Activated naive CD4-positive, alpha-beta T cell treated with anti-CD3 and anti-CD28 coated beads for 36 hours (primary cell): ENCODE measurements at regions of chr5 and their contacts with region 1.

Region 1: GRCh38 chr5:128201065-128201926 is 117.7 kb downstream of the SLC12A2 start:
- DNase-seq: peak; percentile 90
- H3K4me3 Mint-ChIP-seq: no peak overlapping the region
- H3K27ac Mint-ChIP-seq: no peak overlapping the region
- H3K4me1 Mint-ChIP-seq: peaks cover 32% of the 10 kb centered on the region
- H3K27me3 Mint-ChIP-seq: no peaks in the 10 kb centered on the region

Region 2: GRCh38 chr5:127290019-127290945 is 911.0 kb before region 1 on chr5 and contains the start of gene MEGF10:
- CTCF ChIA-PET with region 1: no interaction called
- intact Hi-C with region 1: loop called (anchors 5 kb)
- DNase-seq: peak; percentile 42
- H3K4me3 Mint-ChIP-seq: peak within 1 kb of the TSS; percentile 19
- H3K27ac Mint-ChIP-seq: no peak within 1 kb of the TSS
- H3K4me1 Mint-ChIP-seq: peaks cover 13% of the 10 kb centered on the region
- H3K27me3 Mint-ChIP-seq: peaks cover 49% of the 10 kb centered on the region
- total RNA-seq, gene MEGF10: not detected

Region 3: GRCh38 chr5:127746756-127747155 is 454.5 kb before region 1 on chr5:
- CTCF ChIA-PET with region 1: no interaction called
- intact Hi-C with region 1: loop called (anchors 1 kb)
- DNase-seq: no peak
- H3K4me3 Mint-ChIP-seq: no peak overlapping the region
- H3K27ac Mint-ChIP-seq: no peak overlapping the region
- H3K4me1 Mint-ChIP-seq: no peaks in the 10 kb centered on the region
- H3K27me3 Mint-ChIP-seq: peaks cover 7% of the 10 kb centered on the region

Region 4: DNA sequence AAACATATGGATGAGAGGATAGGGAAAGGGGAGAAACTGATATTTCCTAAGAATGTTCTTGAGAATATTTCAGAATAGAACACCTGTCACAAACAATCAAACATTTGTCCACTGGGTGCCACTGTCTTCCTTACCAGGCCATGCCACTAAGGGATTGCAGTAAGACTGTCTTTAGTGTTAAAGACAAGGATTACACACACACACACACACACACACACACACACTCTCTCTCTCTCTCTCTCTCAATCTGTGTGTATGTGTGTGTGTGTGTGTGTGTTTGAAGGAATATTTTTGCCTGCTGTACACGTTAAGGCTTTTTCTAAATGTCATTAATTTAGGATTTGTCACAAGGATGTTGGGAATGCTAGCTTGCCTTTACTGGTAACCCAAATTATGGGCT is 443.7 kb before region 1 on chr5:
- CTCF ChIA-PET with region 1: interaction called, 5 read pairs
- intact Hi-C with region 1: loop called (anchors 1 kb)
- DNase-seq: peak; percentile 42
- H3K4me3 Mint-ChIP-seq: no peak overlapping the region
- H3K27ac Mint-ChIP-seq: no peak overlapping the region
- H3K4me1 Mint-ChIP-seq: no peaks in the 10 kb centered on the region
- H3K27me3 Mint-ChIP-seq: peaks cover 2% of the 10 kb centered on the region

Region 5: GRCh38 chr5:127875235-127876021 is 325.9 kb before region 1 on chr5:
- CTCF ChIA-PET with region 1: interaction called, 5 read pairs
- intact Hi-C with region 1: loop called (anchors 1 kb)
- DNase-seq: peak; percentile 59
- H3K4me3 Mint-ChIP-seq: no peak overlapping the region
- H3K27ac Mint-ChIP-seq: no peak overlapping the region
- H3K4me1 Mint-ChIP-seq: no peaks in the 10 kb centered on the region
- H3K27me3 Mint-ChIP-seq: peaks cover 3% of the 10 kb centered on the region